Esophagus muscularis mucosa (tissue), 4 donors: ENCODE measurements at regions of chr19 and their contacts with region 1.

Region 1: DNA sequence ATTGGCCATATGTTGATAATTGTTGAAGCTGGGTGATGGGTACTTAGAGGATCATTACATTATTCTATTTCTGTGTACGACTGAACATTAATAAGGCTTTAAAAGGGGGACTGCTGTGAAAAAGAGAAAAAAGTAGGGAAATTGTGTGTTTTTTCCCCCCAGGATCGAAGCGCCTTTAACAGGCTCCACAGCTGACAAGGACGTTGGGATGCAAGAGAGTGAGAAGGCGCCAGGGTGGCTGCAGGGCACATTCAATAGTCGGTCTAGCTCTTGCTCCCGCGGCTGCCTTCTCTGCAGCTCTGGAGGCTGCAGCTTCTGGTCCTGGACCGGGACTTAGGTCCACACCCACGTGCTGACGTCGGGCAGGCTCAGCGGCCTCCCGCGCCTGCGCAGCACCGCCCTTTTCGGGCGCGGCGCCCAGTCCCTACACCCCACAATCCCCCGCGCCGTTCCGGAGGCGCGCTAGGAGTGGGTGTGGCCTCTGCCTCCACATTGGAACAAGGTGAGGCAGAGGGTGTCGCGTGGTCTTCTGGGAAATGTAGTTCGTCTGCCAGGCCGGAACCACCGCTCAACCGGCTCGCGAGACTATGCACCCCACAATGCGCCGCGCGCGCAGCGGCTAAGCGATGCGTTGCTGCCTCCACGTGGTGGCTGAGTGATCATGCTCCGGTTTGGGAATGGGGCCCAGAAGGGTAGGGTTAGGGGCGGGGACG is 4.9 kb upstream of the LRFN3 start:
- DNase-seq: peak; percentile 100
- H3K4me3 ChIP-seq: peak overlapping the region in 3 of 4 donors; percentile 14 to 24 (median 24)
- H3K27ac ChIP-seq: peak overlapping the region; percentile 55 to 80 (median 66)
- H3K4me1 ChIP-seq: peaks cover 13 to 25% (median 22%) of the 10 kb centered on the region in 4 donors
- H3K27me3 ChIP-seq: no peaks in the 10 kb centered on the region
- CTCF ChIP-seq: peak; percentile 85 to 99 (median 97)
- EP300 ChIP-seq: no peak
- POLR2A ChIP-seq: no peak

Region 2: GRCh38 chr19:35693830-35694599 is 237.3 kb before region 1 on chr19:
- intact Hi-C with region 1: loop called (anchors 5 kb)
- DNase-seq: peak; percentile 95
- H3K4me3 ChIP-seq: no peak overlapping the region
- H3K27ac ChIP-seq: no peak overlapping the region
- H3K4me1 ChIP-seq: no peaks in the 10 kb centered on the region
- H3K27me3 ChIP-seq: peaks cover 0 to 3% (median 0%) of the 10 kb centered on the region in 4 donors
- CTCF ChIP-seq: peak; percentile 94 to 99 (median 99)
- EP300 ChIP-seq: no peak
- POLR2A ChIP-seq: no peak

Region 3: GRCh38 chr19:35760711-35761349 is 170.5 kb before region 1 on chr19:
- intact Hi-C with region 1: loop called (anchors 5 kb)
- DNase-seq: no peak
- H3K4me3 ChIP-seq: no peak overlapping the region
- H3K27ac ChIP-seq: no peak overlapping the region
- H3K4me1 ChIP-seq: peaks cover 23 to 37% (median 35%) of the 10 kb centered on the region in 4 donors
- H3K27me3 ChIP-seq: no peaks in the 10 kb centered on the region
- CTCF ChIP-seq: no peak
- EP300 ChIP-seq: no peak
- POLR2A ChIP-seq: no peak

Region 4: DNA sequence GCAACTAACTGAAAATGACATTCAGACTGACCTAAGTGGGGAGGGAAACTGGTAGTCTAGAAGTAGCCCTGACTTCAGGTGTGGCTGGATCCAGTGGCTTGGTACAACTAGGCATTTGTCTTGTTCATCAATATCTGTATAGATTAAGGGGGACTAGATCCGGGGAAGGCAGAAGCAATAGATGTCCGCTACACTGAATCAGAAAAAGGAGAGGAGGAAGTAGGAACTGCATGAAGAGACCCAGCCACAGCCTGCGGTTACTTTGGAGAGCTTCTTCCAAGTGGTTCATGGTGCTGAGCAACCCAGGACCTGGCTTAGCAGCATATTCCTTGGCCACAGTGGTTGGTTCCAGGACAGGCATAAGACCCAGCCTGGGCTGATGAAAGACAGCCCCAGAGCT is 108.7 kb before region 1 on chr19:
- intact Hi-C with region 1: no loop called
- DNase-seq: no peak
- H3K4me3 ChIP-seq: no peak overlapping the region
- H3K27ac ChIP-seq: no peak overlapping the region
- H3K4me1 ChIP-seq: no peaks in the 10 kb centered on the region
- H3K27me3 ChIP-seq: peaks cover 0 to 68% (median 3%) of the 10 kb centered on the region in 4 donors
- CTCF ChIP-seq: no peak
- EP300 ChIP-seq: no peak
- POLR2A ChIP-seq: no peak

Region 5: GRCh38 chr19:35879770-35880317 is 51.5 kb before region 1 on chr19:
- intact Hi-C with region 1: loop called (anchors 1 kb)
- DNase-seq: no peak
- H3K4me3 ChIP-seq: no peak overlapping the region
- H3K27ac ChIP-seq: no peak overlapping the region
- H3K4me1 ChIP-seq: peaks cover 0 to 9% (median 5%) of the 10 kb centered on the region in 4 donors
- H3K27me3 ChIP-seq: peaks cover 0 to 32% (median 0%) of the 10 kb centered on the region in 4 donors
- CTCF ChIP-seq: no peak
- EP300 ChIP-seq: no peak
- POLR2A ChIP-seq: no peak

Region 6: DNA sequence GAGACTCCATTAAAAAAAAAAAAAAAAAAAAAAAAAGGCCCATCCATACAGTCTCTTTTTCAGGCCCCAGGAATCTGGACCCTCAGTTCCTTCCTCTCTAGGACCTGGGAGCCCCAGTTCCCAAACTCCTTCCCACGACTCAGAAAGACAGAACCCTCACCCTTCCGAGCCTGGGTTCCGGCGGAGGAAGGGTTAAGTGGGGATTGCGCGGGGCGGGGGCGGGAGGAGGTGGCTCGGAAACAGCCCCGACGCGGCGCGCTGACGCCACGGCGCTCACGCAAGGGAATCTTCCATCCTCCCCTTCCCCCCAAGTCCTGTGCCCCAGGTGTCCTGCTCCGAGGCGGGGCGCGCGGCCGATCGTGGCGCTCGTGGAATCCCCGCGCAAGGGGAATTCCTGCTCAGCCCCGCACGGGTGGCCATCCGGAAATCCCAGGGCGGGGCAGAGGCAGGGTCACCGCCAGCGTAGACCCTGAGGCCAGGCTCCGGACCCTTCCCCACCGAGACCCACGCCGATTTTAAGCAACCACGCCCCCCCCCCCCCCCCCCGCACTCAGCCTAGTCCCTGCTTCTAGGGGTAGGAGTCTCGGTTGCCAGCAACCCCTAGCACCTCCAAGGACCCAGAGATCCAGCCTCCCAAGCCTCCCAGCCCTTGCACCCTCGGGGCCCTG is 31.6 kb before region 1 on chr19:
- intact Hi-C with region 1: loop called (anchors 5 kb)
- DNase-seq: no peak
- H3K4me3 ChIP-seq: peak overlapping the region; percentile 68 to 86 (median 74)
- H3K27ac ChIP-seq: peak overlapping the region; percentile 88 to 94 (median 92)
- H3K4me1 ChIP-seq: peaks cover 14 to 59% (median 51%) of the 10 kb centered on the region in 4 donors
- H3K27me3 ChIP-seq: no peaks in the 10 kb centered on the region
- CTCF ChIP-seq: no peak
- EP300 ChIP-seq: no peak
- POLR2A ChIP-seq: peak; percentile 41

Region 7: GRCh38 chr19:35963514-35963913 is 32.2 kb after region 1 on chr19:
- intact Hi-C with region 1: no loop called
- DNase-seq: no peak
- H3K4me3 ChIP-seq: no peak overlapping the region
- H3K27ac ChIP-seq: no peak overlapping the region
- H3K4me1 ChIP-seq: peaks cover 5 to 13% (median 12%) of the 10 kb centered on the region in 4 donors
- H3K27me3 ChIP-seq: peaks cover 0 to 57% (median 24%) of the 10 kb centered on the region in 4 donors
- CTCF ChIP-seq: no peak
- EP300 ChIP-seq: no peak
- POLR2A ChIP-seq: no peak